Naive thymus-derived CD4-positive, alpha-beta T cell (primary cell): ENCODE measurements at regions of chr2 and their contacts with region 1.

Region 1: DNA sequence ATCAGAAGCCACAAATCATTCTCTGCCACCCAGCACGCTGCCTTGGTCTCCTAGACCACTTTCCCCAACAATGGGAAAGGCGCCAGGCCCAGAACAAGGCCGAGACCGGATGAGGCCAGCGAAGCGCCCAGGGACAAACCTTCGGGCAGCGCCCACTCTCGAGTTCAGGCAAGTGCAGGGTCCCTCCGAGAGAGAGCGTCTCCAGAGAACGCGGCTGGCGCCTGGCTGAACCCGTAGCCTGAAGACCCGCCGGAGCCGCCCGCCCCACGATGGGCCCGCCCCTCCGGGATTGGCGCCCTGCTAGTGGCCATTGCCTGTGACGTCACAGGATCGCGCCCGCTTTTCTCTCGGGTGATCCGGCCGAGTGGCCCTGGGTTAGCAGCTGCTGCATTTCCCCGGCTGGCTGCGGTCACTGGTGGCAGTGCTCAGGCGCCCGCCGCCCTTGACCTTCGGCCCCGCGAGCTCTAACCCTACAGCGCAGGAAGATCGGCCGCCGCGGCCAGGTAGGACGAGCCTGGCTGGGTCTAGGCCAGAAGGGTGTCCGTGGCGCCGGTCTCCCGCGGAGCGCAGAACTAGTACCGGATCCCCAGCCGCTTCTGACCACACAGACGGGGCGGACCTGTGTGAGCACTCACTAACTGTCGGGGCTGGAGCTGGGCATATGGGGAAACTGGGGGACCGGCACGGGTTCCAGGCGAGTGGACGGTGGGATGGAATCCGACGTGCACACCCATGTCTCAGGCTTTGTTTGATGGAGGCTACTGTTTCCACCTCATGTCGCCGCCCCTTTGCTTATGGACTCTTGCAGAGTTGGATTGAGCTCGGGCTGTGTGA is at the start of gene FAHD2A:
- DNase-seq: peak; percentile 82 to 95 (median 91)
- ATAC-seq: peak; percentile 95
- H3K4me3 ChIP-seq: peak within 1 kb of the TSS; percentile 94
- H3K4me3 Mint-ChIP-seq: peak within 1 kb of the TSS; percentile 91 to 99 (median 97)
- H3K27ac ChIP-seq: peak within 1 kb of the TSS; percentile 87
- H3K27ac Mint-ChIP-seq: peak within 1 kb of the TSS; percentile 86 to 98 (median 94)
- H3K4me1 ChIP-seq: peaks cover 0 to 5% of the 10 kb centered on the region in 2 donors
- H3K4me1 Mint-ChIP-seq: peaks cover 14 to 26% (median 23%) of the 10 kb centered on the region in 7 donors
- H3K27me3 ChIP-seq: no peaks in the 10 kb centered on the region
- H3K27me3 Mint-ChIP-seq: no peaks in the 10 kb centered on the region
- total RNA-seq, gene FAHD2A: 22.6 to 41.4 (median 33.7) TPM

Region 2: GRCh38 chr2:95121407-95122196 is 281.0 kb before region 1 on chr2 and contains the start of gene MRPS5:
- CTCF ChIA-PET with region 1: no interaction called
- POLR2A ChIA-PET with region 1: no interaction called
- intact Hi-C with region 1: loop called (anchors 1 kb)
- DNase-seq: peak; percentile 63 to 95 (median 72)
- ATAC-seq: peak; percentile 98
- H3K4me3 ChIP-seq: peak within 1 kb of the TSS; percentile 74
- H3K4me3 Mint-ChIP-seq: peak within 1 kb of the TSS; percentile 91 to 99 (median 96)
- H3K27ac ChIP-seq: peak within 1 kb of the TSS; percentile 91
- H3K27ac Mint-ChIP-seq: peak within 1 kb of the TSS; percentile 92 to 97 (median 94)
- H3K4me1 ChIP-seq: peaks cover 19 to 27% of the 10 kb centered on the region in 2 donors
- H3K4me1 Mint-ChIP-seq: peaks cover 38 to 58% (median 52%) of the 10 kb centered on the region in 7 donors
- H3K27me3 ChIP-seq: no peaks in the 10 kb centered on the region
- H3K27me3 Mint-ChIP-seq: no peaks in the 10 kb centered on the region
- total RNA-seq, gene MRPS5: 26.3 to 72.9 (median 60.5) TPM

Region 3: GRCh38 chr2:95165129-95166064 is 237.2 kb before region 1 on chr2 and contains the start of gene ZNF2:
- CTCF ChIA-PET with region 1: interaction called, 6 read pairs
- POLR2A ChIA-PET with region 1: interaction called, 4 read pairs
- intact Hi-C with region 1: loop called (anchors 1 kb)
- DNase-seq: peak; percentile 92 to 98 (median 96)
- ATAC-seq: peak; percentile 97
- H3K4me3 ChIP-seq: peak within 1 kb of the TSS; percentile 91
- H3K4me3 Mint-ChIP-seq: peak within 1 kb of the TSS; percentile 97 to 100 (median 99)
- H3K27ac ChIP-seq: peak within 1 kb of the TSS; percentile 82
- H3K27ac Mint-ChIP-seq: peak within 1 kb of the TSS; percentile 91 to 99 (median 96)
- H3K4me1 ChIP-seq: peaks cover 4 to 13% of the 10 kb centered on the region in 2 donors
- H3K4me1 Mint-ChIP-seq: peaks cover 23 to 54% (median 42%) of the 10 kb centered on the region in 7 donors
- H3K27me3 ChIP-seq: no peaks in the 10 kb centered on the region
- H3K27me3 Mint-ChIP-seq: no peaks in the 10 kb centered on the region
- total RNA-seq, gene ZNF2: 1.5 to 10.2 (median 3.4) TPM

Region 4: DNA sequence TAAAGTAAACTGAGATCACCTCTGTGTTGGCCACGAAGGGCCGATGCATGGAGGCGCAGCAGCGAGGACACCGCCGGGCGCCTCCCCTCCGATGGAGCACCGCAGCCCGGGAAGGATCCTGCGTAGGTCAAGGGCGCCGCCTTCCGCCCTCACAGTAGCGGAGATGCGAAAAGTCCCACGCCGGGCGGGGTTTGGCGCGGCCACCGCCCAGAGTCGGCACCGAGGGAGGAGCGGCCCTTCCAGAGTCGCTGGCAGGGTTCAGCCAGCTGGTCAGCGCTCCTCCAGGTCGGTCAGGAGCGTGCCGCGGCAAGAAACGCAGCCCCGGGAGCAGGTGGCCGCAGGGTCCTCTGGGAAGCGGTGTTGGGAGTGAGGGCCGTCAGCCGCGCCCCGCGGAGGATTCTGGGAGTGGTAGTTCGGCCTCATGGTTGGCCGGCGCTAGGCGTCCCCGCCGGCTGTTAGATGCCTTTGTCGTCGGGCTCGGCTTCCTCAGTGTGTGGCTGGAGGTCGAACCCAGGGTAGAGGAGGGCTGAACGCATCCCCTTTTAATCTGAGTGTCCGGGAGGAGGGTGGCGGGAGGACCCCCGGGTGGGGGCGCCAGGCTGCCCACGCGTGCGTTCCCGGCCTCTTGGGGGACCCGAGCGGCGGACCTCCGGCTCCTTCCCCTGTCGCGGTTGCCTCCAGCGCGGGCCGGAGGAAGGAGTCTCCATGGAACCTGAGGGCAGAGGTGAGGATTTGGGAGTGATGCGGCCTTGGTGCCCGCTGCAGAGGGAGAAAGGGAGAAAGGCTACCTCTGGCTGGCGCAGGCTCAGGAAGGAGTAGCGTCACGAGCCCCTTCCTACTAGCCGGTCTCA is 195.3 kb before region 1 on chr2 and contains the start of gene ZNF892:
- CTCF ChIA-PET with region 1: no interaction called
- POLR2A ChIA-PET with region 1: no interaction called
- intact Hi-C with region 1: loop called in 1 of 2 experiments (anchors 1 kb)
- DNase-seq: peak; percentile 50 to 83 (median 63)
- ATAC-seq: peak; percentile 95
- H3K4me3 ChIP-seq: peak within 1 kb of the TSS; percentile 89
- H3K4me3 Mint-ChIP-seq: peak within 1 kb of the TSS; percentile 92 to 96 (median 94)
- H3K27ac ChIP-seq: peak within 1 kb of the TSS; percentile 85
- H3K27ac Mint-ChIP-seq: peak within 1 kb of the TSS; percentile 75 to 89 (median 81)
- H3K4me1 ChIP-seq: peaks cover 7 to 9% of the 10 kb centered on the region in 2 donors
- H3K4me1 Mint-ChIP-seq: peaks cover 17 to 37% (median 27%) of the 10 kb centered on the region in 7 donors
- H3K27me3 ChIP-seq: no peaks in the 10 kb centered on the region
- H3K27me3 Mint-ChIP-seq: no peaks in the 10 kb centered on the region
- total RNA-seq, gene ZNF892: 1.7 to 6.4 (median 4.3) TPM

Region 5: DNA sequence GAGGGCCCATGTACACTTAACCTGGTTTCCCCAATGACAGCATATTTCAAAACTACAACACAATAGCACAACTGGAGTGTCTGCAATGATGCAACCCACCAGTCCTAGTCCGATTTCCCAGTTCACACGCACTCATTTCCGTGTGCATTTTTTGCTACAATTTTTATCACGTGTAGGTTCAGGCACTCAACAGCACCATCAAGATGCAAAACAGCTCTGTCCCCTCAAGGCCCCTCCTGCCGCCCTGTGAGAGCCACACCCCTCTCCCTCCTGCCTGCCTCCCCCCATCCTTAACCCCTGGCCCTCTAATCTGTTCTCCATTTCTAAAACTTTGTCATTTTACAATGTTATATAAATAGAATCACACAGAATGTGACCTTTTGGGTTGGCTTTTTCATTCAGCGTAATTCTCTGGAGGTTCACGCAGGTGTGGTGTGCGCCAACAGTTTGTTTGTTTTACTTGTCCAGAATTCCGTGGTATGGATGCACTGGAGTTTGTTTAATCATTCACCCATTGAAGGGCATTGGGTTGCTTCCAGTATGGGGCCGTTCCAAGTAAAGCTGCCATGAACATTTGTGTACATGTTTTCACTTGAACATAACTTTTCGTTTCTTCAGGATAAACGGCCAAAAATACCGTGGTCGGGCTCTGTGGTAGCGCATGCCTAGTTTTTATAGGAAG is 97.1 kb before region 1 on chr2:
- CTCF ChIA-PET with region 1: no interaction called
- POLR2A ChIA-PET with region 1: no interaction called
- intact Hi-C with region 1: no loop called
- DNase-seq: no peak
- ATAC-seq: no peak
- H3K4me3 ChIP-seq: no peak overlapping the region
- H3K4me3 Mint-ChIP-seq: no peak overlapping the region
- H3K27ac ChIP-seq: no peak overlapping the region
- H3K27ac Mint-ChIP-seq: no peak overlapping the region
- H3K4me1 ChIP-seq: no peaks in the 10 kb centered on the region
- H3K4me1 Mint-ChIP-seq: no peaks in the 10 kb centered on the region
- H3K27me3 ChIP-seq: no peaks in the 10 kb centered on the region
- H3K27me3 Mint-ChIP-seq: no peaks in the 10 kb centered on the region

Region 6: DNA sequence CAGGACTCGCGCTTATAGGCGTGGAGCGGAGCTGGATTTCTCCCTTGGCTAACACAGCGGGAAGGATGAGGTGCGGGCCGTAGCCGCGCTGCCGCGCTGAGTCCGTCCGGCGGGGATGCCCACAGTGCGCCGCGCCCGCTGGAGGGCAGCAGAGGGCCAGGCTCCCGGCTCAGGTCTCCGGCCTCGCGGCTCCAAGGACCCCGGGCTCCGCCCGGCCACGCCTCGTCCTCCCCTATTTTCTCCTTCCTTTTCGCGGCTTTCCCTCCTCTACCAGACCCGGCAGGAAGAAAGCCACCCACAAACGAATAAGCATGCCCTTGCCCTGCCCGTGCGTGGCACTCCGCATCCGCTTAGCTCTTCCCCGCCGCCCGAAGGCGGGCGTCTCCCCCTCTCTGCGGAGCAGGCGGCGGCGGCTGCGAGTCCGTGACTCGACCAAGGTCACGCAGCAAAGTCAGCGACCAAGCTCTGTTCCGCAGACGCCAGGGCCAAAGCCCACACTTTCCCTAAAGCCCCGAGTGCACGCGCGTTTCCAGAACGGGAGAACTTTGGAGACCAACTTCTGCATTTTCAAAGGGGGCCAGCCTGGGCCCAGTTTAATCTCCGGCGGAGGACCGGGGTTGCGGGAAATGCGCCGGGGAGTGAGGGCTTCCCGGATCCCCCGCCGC is 56.9 kb before region 1 on chr2:
- CTCF ChIA-PET with region 1: no interaction called
- POLR2A ChIA-PET with region 1: no interaction called
- intact Hi-C with region 1: loop called in 1 of 2 experiments (anchors 1 kb)
- DNase-seq: peak in 7 of 9 donors; percentile 19 to 82 (median 37)
- ATAC-seq: peak; percentile 80
- H3K4me3 ChIP-seq: peak overlapping the region; percentile 43
- H3K4me3 Mint-ChIP-seq: peak overlapping the region; percentile 68 to 84 (median 77)
- H3K27ac ChIP-seq: no peak overlapping the region
- H3K27ac Mint-ChIP-seq: no peak overlapping the region
- H3K4me1 ChIP-seq: no peaks in the 10 kb centered on the region
- H3K4me1 Mint-ChIP-seq: peaks cover 0 to 3% (median 0%) of the 10 kb centered on the region in 7 donors
- H3K27me3 ChIP-seq: peaks cover 3 to 9% of the 10 kb centered on the region in 2 donors
- H3K27me3 Mint-ChIP-seq: peaks cover 38 to 57% (median 40%) of the 10 kb centered on the region in 5 donors

Region 7: DNA sequence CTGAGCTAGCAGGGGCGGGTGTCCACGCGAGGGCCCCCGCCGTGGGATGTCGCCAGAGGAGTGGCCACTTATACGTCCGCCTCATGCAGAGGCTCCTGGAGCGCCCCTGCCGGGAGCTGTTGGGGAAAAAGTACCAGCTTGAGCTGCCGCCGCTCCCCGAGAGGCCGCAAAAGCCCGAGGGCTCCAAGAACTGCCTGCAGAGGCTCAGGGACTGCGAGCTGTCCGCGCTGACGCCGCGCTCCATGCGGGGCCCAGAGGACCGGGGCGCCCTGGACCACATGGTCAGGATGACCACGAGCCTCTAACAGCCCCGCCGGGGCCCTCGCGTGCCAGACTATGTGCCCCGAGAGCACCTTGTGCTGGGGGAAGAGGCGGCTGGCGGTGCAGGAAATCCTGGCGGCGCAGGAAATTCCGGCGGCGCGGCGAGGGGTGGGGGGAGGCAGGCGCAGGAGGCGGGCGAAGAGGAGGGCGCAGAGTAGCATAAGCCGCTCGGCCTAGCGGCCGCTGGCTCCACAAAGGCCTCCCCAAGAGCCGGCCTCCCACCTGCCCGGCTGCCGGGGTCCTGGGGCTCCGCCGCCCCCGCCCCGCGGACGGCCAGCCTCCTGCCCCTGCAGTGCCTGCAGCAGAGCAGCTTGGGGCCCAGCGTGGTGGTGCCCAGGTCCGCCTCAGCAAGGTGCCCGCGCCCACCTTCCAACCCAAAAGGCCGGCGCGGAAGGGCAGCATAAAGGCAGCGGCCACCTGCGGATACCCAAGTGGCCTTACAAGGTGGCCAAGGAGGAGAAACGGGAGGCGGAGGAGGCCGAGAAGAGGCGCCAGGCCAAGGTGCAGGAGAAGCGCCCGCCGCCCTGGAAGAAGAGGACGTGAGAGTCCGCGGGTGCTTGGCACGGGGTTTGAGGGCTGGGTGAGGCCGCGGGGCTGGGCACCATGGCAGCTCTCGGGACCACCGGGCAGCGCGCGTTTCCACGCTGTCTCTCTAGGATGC is 124.1 kb after region 1 on chr2:
- CTCF ChIA-PET with region 1: no interaction called
- POLR2A ChIA-PET with region 1: no interaction called
- intact Hi-C with region 1: loop called in 1 of 2 experiments (anchors 5 kb)
- DNase-seq: peak; percentile 12 to 81 (median 38)
- ATAC-seq: peak; percentile 58
- H3K4me3 ChIP-seq: peak overlapping the region; percentile 48
- H3K4me3 Mint-ChIP-seq: peak overlapping the region; percentile 84 to 97 (median 87)
- H3K27ac ChIP-seq: no peak overlapping the region
- H3K27ac Mint-ChIP-seq: peak overlapping the region in 6 of 9 donors; percentile 17 to 88 (median 50)
- H3K4me1 ChIP-seq: no peaks in the 10 kb centered on the region
- H3K4me1 Mint-ChIP-seq: peaks cover 0 to 35% (median 11%) of the 10 kb centered on the region in 7 donors
- H3K27me3 ChIP-seq: no peaks in the 10 kb centered on the region
- H3K27me3 Mint-ChIP-seq: peaks cover 0 to 4% (median 0%) of the 10 kb centered on the region in 5 donors

Region 8: GRCh38 chr2:95670167-95670566 is 267.6 kb after region 1 on chr2:
- CTCF ChIA-PET with region 1: no interaction called
- POLR2A ChIA-PET with region 1: no interaction called
- intact Hi-C with region 1: no loop called
- DNase-seq: no peak
- ATAC-seq: no peak
- H3K4me3 ChIP-seq: no peak overlapping the region
- H3K4me3 Mint-ChIP-seq: no peak overlapping the region
- H3K27ac ChIP-seq: no peak overlapping the region
- H3K27ac Mint-ChIP-seq: no peak overlapping the region
- H3K4me1 ChIP-seq: no peaks in the 10 kb centered on the region
- H3K4me1 Mint-ChIP-seq: peaks cover 6 to 17% (median 13%) of the 10 kb centered on the region in 7 donors
- H3K27me3 ChIP-seq: no peaks in the 10 kb centered on the region
- H3K27me3 Mint-ChIP-seq: peaks cover 0 to 10% (median 5%) of the 10 kb centered on the region in 5 donors

Region 9: GRCh38 chr2:95700519-95700918 is 297.9 kb after region 1 on chr2:
- CTCF ChIA-PET with region 1: no interaction called
- POLR2A ChIA-PET with region 1: no interaction called
- intact Hi-C with region 1: no loop called
- DNase-seq: no peak
- ATAC-seq: peak; percentile 69
- H3K4me3 ChIP-seq: no peak overlapping the region
- H3K4me3 Mint-ChIP-seq: no peak overlapping the region
- H3K27ac ChIP-seq: no peak overlapping the region
- H3K27ac Mint-ChIP-seq: no peak overlapping the region
- H3K4me1 ChIP-seq: no peaks in the 10 kb centered on the region
- H3K4me1 Mint-ChIP-seq: no peaks in the 10 kb centered on the region
- H3K27me3 ChIP-seq: no peaks in the 10 kb centered on the region
- H3K27me3 Mint-ChIP-seq: peaks cover 29 to 41% (median 38%) of the 10 kb centered on the region in 5 donors

Region 10: DNA sequence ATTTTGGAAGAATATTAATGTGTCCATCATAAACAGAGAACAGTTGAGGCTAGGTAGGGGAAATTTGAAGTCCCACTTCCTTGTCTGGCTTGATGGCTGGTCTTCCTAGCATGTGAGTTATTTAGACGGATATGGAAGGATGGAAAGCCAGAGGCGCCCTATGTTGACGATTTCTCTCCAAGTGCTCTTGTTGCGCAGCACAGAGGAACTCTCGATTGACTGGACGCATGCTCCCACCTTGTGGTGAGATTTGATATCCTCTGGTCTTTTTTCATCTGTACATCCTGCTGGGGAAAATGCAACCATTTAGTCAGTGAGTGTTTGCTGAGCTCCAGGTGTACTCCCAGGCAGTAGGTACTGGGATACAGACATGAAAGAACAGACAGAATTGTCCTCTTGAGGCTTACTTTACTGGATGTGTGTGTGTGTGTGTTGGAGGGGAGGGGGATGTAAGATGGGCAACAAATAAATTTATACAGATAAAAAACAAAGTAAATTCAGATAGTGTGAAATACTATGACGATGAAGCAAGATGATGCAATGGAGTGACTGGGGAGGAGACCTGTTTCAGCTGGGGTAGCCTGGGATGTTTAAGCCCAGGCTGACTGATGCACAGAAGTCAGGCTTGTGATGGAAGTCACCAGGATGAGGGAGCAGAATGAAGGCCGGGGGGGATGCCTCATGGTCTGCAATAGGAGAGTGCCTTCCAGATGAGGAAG is 326.4 kb after region 1 on chr2:
- CTCF ChIA-PET with region 1: no interaction called
- POLR2A ChIA-PET with region 1: no interaction called
- intact Hi-C with region 1: loop called in 1 of 2 experiments (anchors 5 kb)
- DNase-seq: peak in 6 of 9 donors; percentile 5 to 38 (median 24)
- ATAC-seq: peak; percentile 63
- H3K4me3 ChIP-seq: no peak overlapping the region
- H3K4me3 Mint-ChIP-seq: no peak overlapping the region
- H3K27ac ChIP-seq: no peak overlapping the region
- H3K27ac Mint-ChIP-seq: no peak overlapping the region
- H3K4me1 ChIP-seq: no peaks in the 10 kb centered on the region
- H3K4me1 Mint-ChIP-seq: no peaks in the 10 kb centered on the region
- H3K27me3 ChIP-seq: no peaks in the 10 kb centered on the region
- H3K27me3 Mint-ChIP-seq: peaks cover 9 to 34% (median 16%) of the 10 kb centered on the region in 5 donors

Region 11: DNA sequence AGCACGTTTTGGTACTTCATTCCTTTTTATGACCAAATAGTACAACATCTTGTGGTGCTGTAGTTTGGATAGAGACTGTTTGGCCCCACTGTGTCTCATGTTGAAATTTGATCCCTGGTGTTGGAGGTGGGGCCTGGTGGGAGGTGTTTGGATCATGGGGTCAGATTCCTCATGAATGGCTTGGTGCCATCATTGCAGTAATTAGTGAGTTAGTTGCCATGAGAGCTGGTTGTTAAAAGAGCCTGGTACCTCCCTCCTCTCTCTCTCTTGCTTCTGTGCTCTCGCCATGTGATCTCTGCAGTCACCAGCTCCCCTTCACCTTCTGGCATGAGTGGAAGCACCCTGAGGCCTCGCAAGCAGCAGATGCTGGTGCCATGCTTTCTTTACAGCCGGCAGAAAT is 983.9 kb after region 1 on chr2:
- CTCF ChIA-PET with region 1: no interaction called
- POLR2A ChIA-PET with region 1: no interaction called
- intact Hi-C with region 1: no loop called
- DNase-seq: no peak
- ATAC-seq: no peak
- H3K4me3 ChIP-seq: no peak overlapping the region
- H3K4me3 Mint-ChIP-seq: no peak overlapping the region
- H3K27ac ChIP-seq: no peak overlapping the region
- H3K27ac Mint-ChIP-seq: no peak overlapping the region
- H3K4me1 ChIP-seq: no peaks in the 10 kb centered on the region
- H3K4me1 Mint-ChIP-seq: peaks cover 7 to 9% (median 8%) of the 10 kb centered on the region in 7 donors
- H3K27me3 ChIP-seq: no peaks in the 10 kb centered on the region
- H3K27me3 Mint-ChIP-seq: no peaks in the 10 kb centered on the region